ENCODE measurements at regions of chr6 and their contacts with region 1.

Region 1: GRCh38 chr6:79557673-79558467 is 20.6 kb upstream of the LCA5 start:
- DNase-seq: no peak
- ATAC-seq: peak; percentile 49
- H3K4me3 ChIP-seq: no peak overlapping the region
- H3K27ac ChIP-seq: no peak overlapping the region
- H3K4me1 ChIP-seq: no peaks in the 10 kb centered on the region
- H3K27me3 ChIP-seq: no peaks in the 10 kb centered on the region
- CTCF ChIP-seq: no peak
- EP300 ChIP-seq: no peak
- POLR2A ChIP-seq: no peak
- RAD21 ChIP-seq: no peak

Region 2: DNA sequence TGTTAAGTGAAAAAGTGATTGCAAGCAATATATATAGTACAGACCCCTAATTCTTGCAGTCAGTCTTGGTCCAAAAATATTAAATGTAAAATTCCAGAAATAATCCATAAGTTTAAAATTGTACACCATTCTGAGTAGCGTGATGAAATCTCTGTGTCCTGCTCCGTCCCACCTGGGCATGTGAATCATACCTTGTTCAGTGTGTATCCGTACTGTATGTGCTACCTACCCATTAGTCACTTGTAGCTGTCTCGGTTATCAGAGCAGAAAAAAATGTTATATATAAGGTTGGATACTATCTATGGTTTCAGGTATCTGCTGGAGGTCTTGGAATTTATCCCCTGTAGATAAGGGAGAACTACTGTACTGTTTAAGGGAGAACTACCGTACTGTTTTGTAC is 674.2 kb before region 1 on chr6:
- CTCF ChIA-PET with region 1: no interaction called
- POLR2A ChIA-PET with region 1: no interaction called
- in situ Hi-C with region 1: no loop called
- intact Hi-C with region 1: no loop called
- DNase-seq: no peak
- ATAC-seq: no peak
- H3K4me3 ChIP-seq: no peak overlapping the region
- H3K27ac ChIP-seq: no peak overlapping the region
- H3K4me1 ChIP-seq: no peaks in the 10 kb centered on the region
- H3K27me3 ChIP-seq: no peaks in the 10 kb centered on the region
- CTCF ChIP-seq: no peak
- EP300 ChIP-seq: no peak
- POLR2A ChIP-seq: no peak
- RAD21 ChIP-seq: no peak

Region 3: GRCh38 chr6:79208816-79209215 is 349.1 kb before region 1 on chr6:
- CTCF ChIA-PET with region 1: no interaction called
- POLR2A ChIA-PET with region 1: no interaction called
- in situ Hi-C with region 1: no loop called
- intact Hi-C with region 1: no loop called
- DNase-seq: no peak
- ATAC-seq: no peak
- H3K4me3 ChIP-seq: no peak overlapping the region
- H3K27ac ChIP-seq: no peak overlapping the region
- H3K4me1 ChIP-seq: no peaks in the 10 kb centered on the region
- H3K27me3 ChIP-seq: no peaks in the 10 kb centered on the region
- CTCF ChIP-seq: no peak
- EP300 ChIP-seq: no peak
- POLR2A ChIP-seq: no peak
- RAD21 ChIP-seq: no peak

Region 4: DNA sequence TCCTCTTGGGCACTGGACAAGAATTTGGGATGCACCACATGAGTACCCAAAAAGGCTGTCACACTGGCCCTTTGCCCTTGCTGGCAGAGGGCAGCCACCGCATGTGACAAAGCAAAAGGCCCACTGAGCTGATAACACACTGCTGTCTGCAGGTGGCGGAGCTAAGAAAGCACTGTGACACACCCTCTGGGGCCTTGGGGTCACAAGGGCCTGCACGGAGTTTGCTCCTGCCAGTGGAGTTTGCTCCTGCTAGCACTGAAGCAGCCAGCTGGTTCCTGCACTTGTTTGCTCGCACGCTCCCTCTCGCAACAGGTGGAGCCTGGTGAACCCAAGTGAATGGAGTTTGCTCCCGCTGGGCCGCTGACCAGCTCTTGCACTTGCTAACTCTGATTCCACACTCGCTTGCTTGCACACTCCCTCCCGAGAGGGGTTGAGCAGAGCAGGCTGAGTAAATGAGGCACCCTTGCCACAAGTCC is 153.2 kb before region 1 on chr6:
- CTCF ChIA-PET with region 1: no interaction called
- POLR2A ChIA-PET with region 1: no interaction called
- in situ Hi-C with region 1: no loop called
- intact Hi-C with region 1: loop called (anchors 10 kb)
- DNase-seq: peak in 2 of 4 experiments; percentile 8 to 64
- ATAC-seq: peak; percentile 82
- H3K4me3 ChIP-seq: no peak overlapping the region
- H3K27ac ChIP-seq: no peak overlapping the region
- H3K4me1 ChIP-seq: peaks cover 4 to 6% of the 10 kb centered on the region in 2 experiments; a peak in 2 of 5 replicates
- H3K27me3 ChIP-seq: no peaks in the 10 kb centered on the region
- CTCF ChIP-seq: no peak
- EP300 ChIP-seq: no peak
- POLR2A ChIP-seq: no peak
- RAD21 ChIP-seq: no peak; a peak in 1 of 4 replicates

Region 5: DNA sequence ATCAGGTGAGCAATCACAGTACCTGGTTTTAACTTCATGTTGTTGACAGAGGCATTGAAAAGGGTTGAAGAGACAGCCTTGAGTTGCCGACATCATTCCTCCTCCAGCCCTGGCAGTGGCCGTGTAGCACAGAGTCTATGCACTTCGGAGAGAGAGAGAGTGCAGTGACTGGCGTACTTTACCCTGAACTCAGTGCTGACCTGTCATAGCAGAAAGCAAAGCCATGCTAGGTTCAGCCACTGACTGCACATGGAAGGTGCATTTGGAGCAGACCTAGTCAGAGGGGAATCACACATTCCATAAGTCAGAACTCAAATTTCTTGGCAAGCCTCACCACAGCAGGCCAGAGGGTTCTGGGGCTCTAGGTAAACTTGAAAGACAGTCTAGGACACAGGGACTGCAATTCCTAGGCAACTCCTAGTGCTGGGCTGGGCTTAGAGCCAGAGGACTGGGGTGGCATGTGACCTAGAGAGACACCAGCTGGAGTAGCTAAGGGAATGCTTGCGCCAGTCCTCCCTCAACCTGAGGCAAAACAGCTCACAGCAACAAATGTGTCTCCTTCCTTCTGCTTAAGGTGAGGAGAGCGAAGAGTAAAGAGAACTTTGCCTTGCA is 320.4 kb after region 1 on chr6:
- CTCF ChIA-PET with region 1: no interaction called
- POLR2A ChIA-PET with region 1: no interaction called
- in situ Hi-C with region 1: no loop called
- intact Hi-C with region 1: no loop called
- DNase-seq: no peak
- ATAC-seq: no peak
- H3K4me3 ChIP-seq: no peak overlapping the region
- H3K27ac ChIP-seq: no peak overlapping the region
- H3K4me1 ChIP-seq: no peaks in the 10 kb centered on the region
- H3K27me3 ChIP-seq: peaks cover 0 to 2% of the 10 kb centered on the region in 2 experiments; a peak in 2 of 5 replicates
- CTCF ChIP-seq: no peak
- EP300 ChIP-seq: no peak
- POLR2A ChIP-seq: no peak
- RAD21 ChIP-seq: no peak